H1 (cell line): ENCODE measurements at regions of chr22 and their contacts with region 1.

Region 1: GRCh38 chr22:45009881-45010531 is at the start of gene PHF21B:
- DNase-seq: peak in 1 of 2 experiments; percentile 91
- H3K4me3 ChIP-seq: peak within 1 kb of the TSS; percentile 78 to 96 (median 86)
- H3K27ac ChIP-seq: peak within 1 kb of the TSS; percentile 87
- H3K4me1 ChIP-seq: peaks cover 2 to 25% (median 15%) of the 10 kb centered on the region in 4 experiments
- H3K27me3 ChIP-seq: no peaks in the 10 kb centered on the region
- CTCF ChIP-seq: no peak
- EP300 ChIP-seq: no peak
- POLR2A ChIP-seq: peak; percentile 72 to 83
- RAD21 ChIP-seq: no peak; a peak in 1 of 4 replicates
- total RNA-seq, gene PHF21B: 57.2 and 68.1 TPM in 2 replicates

Region 2: GRCh38 chr22:44819971-44820631 is 189.9 kb before region 1 on chr22:
- CTCF ChIA-PET with region 1: interaction called, 13 read pairs
- POLR2A ChIA-PET with region 1: no interaction called
- DNase-seq: peak in 1 of 2 experiments; percentile 67
- H3K4me3 ChIP-seq: no peak overlapping the region
- H3K27ac ChIP-seq: no peak overlapping the region
- H3K4me1 ChIP-seq: peaks cover 0 to 13% (median 5%) of the 10 kb centered on the region in 4 experiments; a peak in 6 of 7 replicates
- H3K27me3 ChIP-seq: no peaks in the 10 kb centered on the region
- CTCF ChIP-seq: no peak
- EP300 ChIP-seq: no peak
- POLR2A ChIP-seq: no peak
- RAD21 ChIP-seq: no peak

Region 3: DNA sequence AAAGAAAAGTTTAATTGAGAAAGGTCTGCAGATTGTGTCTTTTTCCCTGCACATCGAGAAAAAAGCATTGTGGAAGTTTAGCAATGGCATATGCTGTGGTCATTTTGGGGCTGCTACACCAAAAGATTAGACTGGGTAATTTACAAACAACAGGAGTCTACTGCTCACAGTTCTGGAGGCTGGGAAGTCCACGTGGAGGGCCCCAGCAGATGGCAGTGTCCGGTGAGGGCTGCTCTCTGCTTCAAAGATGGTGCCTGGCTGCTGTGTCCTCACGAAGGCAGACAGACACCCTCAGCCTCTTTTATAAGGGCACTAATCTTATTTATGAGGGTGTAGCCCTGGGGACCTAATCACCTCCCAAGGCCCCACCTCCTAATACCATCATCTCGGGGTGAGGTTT is 21.3 kb before region 1 on chr22:
- CTCF ChIA-PET with region 1: no interaction called
- POLR2A ChIA-PET with region 1: interaction called, 208 read pairs
- DNase-seq: no peak
- H3K4me3 ChIP-seq: no peak overlapping the region
- H3K27ac ChIP-seq: no peak overlapping the region
- H3K4me1 ChIP-seq: peaks cover 0 to 7% (median 0%) of the 10 kb centered on the region in 4 experiments; a peak in 1 of 7 replicates
- H3K27me3 ChIP-seq: no peaks in the 10 kb centered on the region
- CTCF ChIP-seq: peak in 1 of 3 experiments; percentile 1; a peak in 1 of 4 replicates
- EP300 ChIP-seq: no peak
- POLR2A ChIP-seq: no peak
- RAD21 ChIP-seq: peak in 1 of 2 experiments; percentile 17; a peak in 1 of 4 replicates

Region 4: GRCh38 chr22:45019861-45020655 is 10.1 kb after region 1 on chr22:
- CTCF ChIA-PET with region 1: interaction called, 4 read pairs
- POLR2A ChIA-PET with region 1: interaction called, 44 read pairs
- DNase-seq: no peak
- H3K4me3 ChIP-seq: no peak overlapping the region
- H3K27ac ChIP-seq: no peak overlapping the region
- H3K4me1 ChIP-seq: peaks cover 5 to 16% (median 5%) of the 10 kb centered on the region in 4 experiments; a peak in 6 of 7 replicates
- H3K27me3 ChIP-seq: no peaks in the 10 kb centered on the region; a peak in 1 of 7 replicates
- CTCF ChIP-seq: no peak
- EP300 ChIP-seq: no peak
- POLR2A ChIP-seq: no peak
- RAD21 ChIP-seq: no peak

Region 5: GRCh38 chr22:45031629-45032403 is 21.8 kb after region 1 on chr22:
- CTCF ChIA-PET with region 1: no interaction called
- POLR2A ChIA-PET with region 1: interaction called, 12 read pairs
- DNase-seq: no peak
- H3K4me3 ChIP-seq: no peak overlapping the region
- H3K27ac ChIP-seq: peak overlapping the region; percentile 58; the same call in 1 of the 2 replicates
- H3K4me1 ChIP-seq: no peaks in the 10 kb centered on the region; a peak in 1 of 7 replicates
- H3K27me3 ChIP-seq: no peaks in the 10 kb centered on the region
- CTCF ChIP-seq: no peak
- EP300 ChIP-seq: 0 out of 3 replicates have a peak, but pooled peaks of 1 of the 2 experiments have one; percentile 20
- POLR2A ChIP-seq: no peak
- RAD21 ChIP-seq: no peak

Region 6: GRCh38 chr22:45096256-45096907 is 86.4 kb after region 1 on chr22:
- CTCF ChIA-PET with region 1: interaction called, 11 read pairs
- POLR2A ChIA-PET with region 1: interaction called, 13 read pairs
- DNase-seq: peak in 1 of 2 experiments; percentile 81
- H3K4me3 ChIP-seq: no peak overlapping the region
- H3K27ac ChIP-seq: no peak overlapping the region
- H3K4me1 ChIP-seq: peaks cover 0 to 4% (median 0%) of the 10 kb centered on the region in 4 experiments; a peak in 2 of 7 replicates
- H3K27me3 ChIP-seq: no peaks in the 10 kb centered on the region
- CTCF ChIP-seq: peak; percentile 64 to 91 (median 86)
- EP300 ChIP-seq: no peak
- POLR2A ChIP-seq: no peak
- RAD21 ChIP-seq: peak; percentile 81 to 86

Region 7: DNA sequence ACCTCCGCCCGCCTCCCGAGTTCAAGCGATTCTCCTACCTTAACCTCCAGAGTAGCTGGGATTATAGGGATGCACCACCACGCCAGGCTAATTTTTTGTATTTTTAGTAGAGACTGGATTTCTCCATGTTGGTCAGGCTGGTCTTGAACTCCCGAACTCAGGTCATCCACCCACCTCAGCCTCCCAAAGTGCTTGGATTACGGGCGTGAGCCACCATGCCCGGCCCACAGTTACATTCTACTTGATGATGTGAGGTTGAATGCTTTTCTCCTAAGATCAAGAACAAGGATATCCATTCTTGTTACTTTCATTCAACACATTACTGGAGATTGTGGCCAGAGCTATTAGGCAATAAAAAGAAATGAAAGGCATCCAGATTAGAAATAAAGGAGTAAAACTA is 104.1 kb after region 1 on chr22:
- CTCF ChIA-PET with region 1: no interaction called
- POLR2A ChIA-PET with region 1: no interaction called
- DNase-seq: no peak
- H3K4me3 ChIP-seq: no peak overlapping the region
- H3K27ac ChIP-seq: no peak overlapping the region
- H3K4me1 ChIP-seq: no peaks in the 10 kb centered on the region
- H3K27me3 ChIP-seq: no peaks in the 10 kb centered on the region
- CTCF ChIP-seq: no peak
- EP300 ChIP-seq: no peak
- POLR2A ChIP-seq: no peak
- RAD21 ChIP-seq: no peak

Region 8: GRCh38 chr22:45202333-45203149 is 192.5 kb after region 1 on chr22:
- CTCF ChIA-PET with region 1: no interaction called
- POLR2A ChIA-PET with region 1: no interaction called
- DNase-seq: no peak
- H3K4me3 ChIP-seq: no peak overlapping the region
- H3K27ac ChIP-seq: no peak overlapping the region
- H3K4me1 ChIP-seq: peaks cover 0 to 18% (median 3%) of the 10 kb centered on the region in 4 experiments; a peak in 3 of 7 replicates
- H3K27me3 ChIP-seq: no peaks in the 10 kb centered on the region
- CTCF ChIP-seq: no peak
- EP300 ChIP-seq: no peak
- POLR2A ChIP-seq: no peak
- RAD21 ChIP-seq: no peak